ENCODE measurements at regions of chr16 and their contacts with region 1.

Region 1: DNA sequence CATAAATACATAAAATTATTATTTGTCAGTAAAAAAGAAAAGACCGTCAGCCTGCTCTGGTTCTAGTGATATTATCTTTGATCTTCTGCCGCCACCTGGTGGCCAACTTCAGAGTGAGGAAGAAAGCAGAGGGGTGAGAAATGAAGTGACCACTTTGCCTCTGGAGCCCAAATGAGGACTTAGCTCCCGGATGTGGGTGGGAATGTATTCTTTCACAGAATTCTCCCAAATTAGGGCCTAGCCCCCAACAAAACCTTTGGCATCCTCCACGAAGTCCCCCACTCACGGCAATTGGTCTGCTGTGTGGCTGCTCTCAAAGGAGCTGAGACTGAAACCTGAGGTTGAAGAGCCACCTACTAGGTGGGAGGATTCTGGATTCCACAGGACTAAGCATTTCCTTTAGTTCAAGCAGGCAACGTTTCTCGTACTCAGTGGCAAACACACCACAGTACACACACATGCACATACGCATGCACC is 4.9 kb upstream of the ZNF267 start:
- DNase-seq: peak; percentile 62 to 81 (median 74)
- ATAC-seq: peak; percentile 20
- H3K4me3 ChIP-seq: peak overlapping the region; percentile 42
- H3K4me3 Mint-ChIP-seq: peak overlapping the region; percentile 67 to 86 (median 74)
- H3K27ac ChIP-seq: peak overlapping the region; percentile 60
- H3K27ac Mint-ChIP-seq: peak overlapping the region; percentile 8 to 95 (median 85)
- H3K4me1 ChIP-seq: peaks cover 32 to 36% of the 10 kb centered on the region in 2 donors
- H3K4me1 Mint-ChIP-seq: peaks cover 27 to 65% (median 50%) of the 10 kb centered on the region in 7 donors
- H3K27me3 ChIP-seq: no peaks in the 10 kb centered on the region
- H3K27me3 Mint-ChIP-seq: peaks cover 0 to 5% (median 0%) of the 10 kb centered on the region in 5 donors

Region 2: GRCh38 chr16:31032736-31033708 is 835.7 kb before region 1 on chr16 and contains the start of gene STX4:
- CTCF ChIA-PET with region 1: no interaction called
- POLR2A ChIA-PET with region 1: no interaction called
- intact Hi-C with region 1: loop called in 1 of 2 experiments (anchors 2 kb)
- DNase-seq: peak; percentile 90 to 100 (median 97)
- ATAC-seq: peak; percentile 89
- H3K4me3 ChIP-seq: peak within 1 kb of the TSS; percentile 82
- H3K4me3 Mint-ChIP-seq: peak within 1 kb of the TSS; percentile 78 to 100 (median 96)
- H3K27ac ChIP-seq: peak within 1 kb of the TSS; percentile 93
- H3K27ac Mint-ChIP-seq: peak within 1 kb of the TSS; percentile 84 to 99 (median 97)
- H3K4me1 ChIP-seq: peaks cover 14 to 16% of the 10 kb centered on the region in 2 donors
- H3K4me1 Mint-ChIP-seq: peaks cover 15 to 35% (median 22%) of the 10 kb centered on the region in 7 donors
- H3K27me3 ChIP-seq: no peaks in the 10 kb centered on the region
- H3K27me3 Mint-ChIP-seq: peaks cover 0 to 3% (median 0%) of the 10 kb centered on the region in 5 donors
- total RNA-seq, gene STX4: 77.9 to 114 (median 100) TPM

Region 3: DNA sequence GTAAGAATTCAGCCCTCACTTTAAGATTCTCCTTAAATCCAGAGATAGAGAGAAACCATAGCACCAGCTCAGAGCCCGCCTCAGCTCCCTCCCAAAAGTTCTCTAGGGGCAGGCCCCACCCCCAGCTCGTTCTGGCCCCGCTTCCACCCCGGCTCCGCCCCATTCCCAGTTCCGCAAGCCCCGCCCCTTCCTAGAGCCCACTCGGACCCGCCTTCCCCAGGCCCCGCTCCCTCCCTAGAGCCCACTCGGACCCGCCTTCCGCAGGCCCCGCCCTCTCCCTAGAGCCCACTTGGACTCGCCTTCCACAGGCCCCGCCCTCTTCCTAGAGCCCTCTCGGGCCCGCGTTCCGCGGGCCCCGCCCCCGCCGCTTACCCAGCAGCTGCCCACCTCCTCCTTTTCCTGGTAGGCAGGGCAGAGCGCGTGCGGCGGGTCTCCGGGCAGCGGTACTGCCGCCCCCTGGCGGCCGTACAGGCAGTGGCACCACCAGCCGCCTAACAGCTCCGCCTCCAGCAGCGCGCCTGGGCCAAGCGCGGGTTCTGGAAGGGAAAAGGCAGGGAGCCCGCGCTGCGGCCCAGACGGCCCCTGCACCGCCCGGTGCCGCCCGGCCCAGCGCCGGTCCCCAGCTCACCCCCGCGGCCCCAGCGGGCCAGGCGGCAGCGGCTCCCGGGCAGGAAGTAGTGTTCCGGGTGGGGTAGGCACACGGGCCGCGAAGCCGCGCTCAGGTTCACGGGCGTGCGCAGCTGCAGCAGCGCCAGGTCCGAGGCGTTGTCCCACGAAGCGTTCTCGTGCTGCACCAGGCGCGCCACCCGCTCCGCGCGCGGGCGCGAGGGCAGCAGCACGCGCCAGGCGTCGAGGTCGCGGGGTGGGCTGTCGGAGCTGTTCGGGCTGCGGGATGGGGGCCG is 726.4 kb before region 1 on chr16:
- CTCF ChIA-PET with region 1: interaction called, 4 read pairs
- POLR2A ChIA-PET with region 1: interaction called, 7 read pairs
- intact Hi-C with region 1: loop called (anchors 1 kb)
- DNase-seq: peak; percentile 91 to 98 (median 95)
- ATAC-seq: peak; percentile 95
- H3K4me3 ChIP-seq: peak overlapping the region; percentile 68
- H3K4me3 Mint-ChIP-seq: peak overlapping the region; percentile 61 to 84 (median 72)
- H3K27ac ChIP-seq: peak overlapping the region; percentile 74
- H3K27ac Mint-ChIP-seq: peak overlapping the region; percentile 73 to 94 (median 84)
- H3K4me1 ChIP-seq: peaks cover 6 to 14% of the 10 kb centered on the region in 2 donors
- H3K4me1 Mint-ChIP-seq: peaks cover 0 to 17% (median 14%) of the 10 kb centered on the region in 7 donors
- H3K27me3 ChIP-seq: no peaks in the 10 kb centered on the region
- H3K27me3 Mint-ChIP-seq: peaks cover 0 to 3% (median 0%) of the 10 kb centered on the region in 5 donors

Region 4: GRCh38 chr16:31333686-31334649 is 534.8 kb before region 1 on chr16:
- CTCF ChIA-PET with region 1: no interaction called
- POLR2A ChIA-PET with region 1: no interaction called
- intact Hi-C with region 1: loop called in 1 of 2 experiments (anchors 5 kb)
- DNase-seq: peak in 5 of 9 donors; percentile 25 to 47 (median 34)
- ATAC-seq: peak; percentile 87
- H3K4me3 ChIP-seq: no peak overlapping the region
- H3K4me3 Mint-ChIP-seq: peak overlapping the region in 1 of 10 donors; percentile 34
- H3K27ac ChIP-seq: peak overlapping the region; percentile 1
- H3K27ac Mint-ChIP-seq: peak overlapping the region in 7 of 9 donors; percentile 26 to 95 (median 48)
- H3K4me1 ChIP-seq: peaks cover 0 to 3% of the 10 kb centered on the region in 2 donors
- H3K4me1 Mint-ChIP-seq: peaks cover 16 to 48% (median 28%) of the 10 kb centered on the region in 7 donors
- H3K27me3 ChIP-seq: no peaks in the 10 kb centered on the region
- H3K27me3 Mint-ChIP-seq: peaks cover 0 to 17% (median 10%) of the 10 kb centered on the region in 5 donors

Region 5: GRCh38 chr16:31440516-31441184 is 428.1 kb before region 1 on chr16:
- CTCF ChIA-PET with region 1: interaction called, 3 read pairs
- POLR2A ChIA-PET with region 1: interaction called, 3 read pairs
- intact Hi-C with region 1: loop called in 1 of 2 experiments (anchors 1 kb)
- DNase-seq: no peak
- ATAC-seq: no peak
- H3K4me3 ChIP-seq: no peak overlapping the region
- H3K4me3 Mint-ChIP-seq: peak overlapping the region in 1 of 10 donors; percentile 22
- H3K27ac ChIP-seq: no peak overlapping the region
- H3K27ac Mint-ChIP-seq: no peak overlapping the region
- H3K4me1 ChIP-seq: no peaks in the 10 kb centered on the region
- H3K4me1 Mint-ChIP-seq: peaks cover 0 to 23% (median 9%) of the 10 kb centered on the region in 7 donors
- H3K27me3 ChIP-seq: no peaks in the 10 kb centered on the region
- H3K27me3 Mint-ChIP-seq: peaks cover 0 to 3% (median 0%) of the 10 kb centered on the region in 5 donors

Region 6: DNA sequence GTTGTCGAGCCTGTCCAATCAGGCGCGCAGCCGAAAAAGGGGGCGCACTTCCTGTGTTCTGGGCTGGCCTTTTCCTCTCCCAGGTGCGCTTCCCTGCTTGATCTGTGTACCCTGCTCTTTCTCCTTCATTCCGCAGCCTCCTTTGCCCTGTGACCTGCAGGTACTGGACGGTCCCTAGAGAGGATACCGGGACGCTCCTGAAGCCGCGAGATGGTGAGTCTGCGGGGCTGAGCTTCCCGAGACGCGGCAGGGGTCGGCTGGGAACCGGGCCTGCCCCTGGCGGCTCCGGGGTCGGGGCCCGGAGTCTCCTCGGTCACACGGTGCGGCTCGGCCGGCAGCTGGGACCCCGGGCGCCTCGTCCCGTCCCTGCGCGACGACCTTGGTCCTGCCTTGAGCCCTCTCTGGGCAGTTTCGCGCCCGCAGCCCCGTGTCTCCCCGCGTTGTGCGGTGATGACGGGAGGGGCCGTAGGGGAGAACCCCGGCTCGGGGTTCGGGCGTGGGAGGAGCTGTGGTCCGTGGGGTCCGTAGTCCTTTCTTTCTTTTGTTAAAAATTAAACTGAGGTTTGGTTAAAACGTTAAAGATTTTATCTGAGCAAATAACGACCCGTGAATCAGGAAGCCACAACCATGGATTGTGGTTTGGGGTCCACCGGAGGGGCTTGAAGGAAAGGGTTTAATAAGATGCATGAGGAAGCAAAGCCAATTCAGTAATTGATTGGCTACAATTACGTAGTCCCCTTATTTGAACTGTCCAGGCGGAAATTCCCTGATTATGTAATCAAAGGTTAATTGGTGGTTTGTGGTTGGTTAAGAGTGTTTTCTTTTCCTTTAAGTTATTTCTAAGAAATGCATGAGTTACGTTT is 168.0 kb before region 1 on chr16:
- CTCF ChIA-PET with region 1: interaction called, 3 read pairs
- POLR2A ChIA-PET with region 1: interaction called, 9 read pairs
- intact Hi-C with region 1: loop called (anchors 1 to 2 kb)
- DNase-seq: peak; percentile 67 to 86 (median 81)
- ATAC-seq: peak; percentile 84
- H3K4me3 ChIP-seq: peak overlapping the region; percentile 95
- H3K4me3 Mint-ChIP-seq: peak overlapping the region; percentile 87 to 95 (median 91)
- H3K27ac ChIP-seq: peak overlapping the region; percentile 90
- H3K27ac Mint-ChIP-seq: peak overlapping the region; percentile 86 to 97 (median 93)
- H3K4me1 ChIP-seq: peaks cover 19 to 28% of the 10 kb centered on the region in 2 donors
- H3K4me1 Mint-ChIP-seq: peaks cover 20 to 39% (median 37%) of the 10 kb centered on the region in 7 donors
- H3K27me3 ChIP-seq: no peaks in the 10 kb centered on the region
- H3K27me3 Mint-ChIP-seq: peaks cover 0 to 24% (median 0%) of the 10 kb centered on the region in 5 donors

Region 7: DNA sequence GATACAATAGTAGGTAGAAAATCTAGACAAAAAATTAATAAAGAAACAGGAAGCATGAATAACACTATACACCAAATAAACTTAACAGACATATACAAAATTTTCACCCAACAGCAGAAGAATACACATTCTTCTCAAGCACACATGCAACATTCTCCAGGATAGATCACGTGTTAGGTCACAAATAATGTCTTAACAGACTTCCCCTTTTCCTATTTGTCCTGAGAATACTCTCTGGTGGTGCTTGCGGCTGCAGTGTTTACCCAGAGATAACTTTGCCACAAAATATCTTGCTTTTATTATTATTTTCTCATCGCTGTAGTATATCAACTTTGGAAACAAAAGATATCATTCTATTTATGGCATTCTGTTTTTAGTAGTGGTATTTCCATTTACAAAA is 35.7 kb before region 1 on chr16:
- CTCF ChIA-PET with region 1: no interaction called
- POLR2A ChIA-PET with region 1: no interaction called
- intact Hi-C with region 1: no loop called
- DNase-seq: no peak
- ATAC-seq: no peak
- H3K4me3 ChIP-seq: no peak overlapping the region
- H3K4me3 Mint-ChIP-seq: no peak overlapping the region
- H3K27ac ChIP-seq: no peak overlapping the region
- H3K27ac Mint-ChIP-seq: no peak overlapping the region
- H3K4me1 ChIP-seq: no peaks in the 10 kb centered on the region
- H3K4me1 Mint-ChIP-seq: no peaks in the 10 kb centered on the region
- H3K27me3 ChIP-seq: no peaks in the 10 kb centered on the region
- H3K27me3 Mint-ChIP-seq: peaks cover 0 to 6% (median 0%) of the 10 kb centered on the region in 5 donors

Region 8: GRCh38 chr16:31888735-31889134 is 20.0 kb after region 1 on chr16:
- CTCF ChIA-PET with region 1: no interaction called
- POLR2A ChIA-PET with region 1: interaction called, 17 read pairs
- intact Hi-C with region 1: loop called in 1 of 2 experiments (anchors 2 kb)
- DNase-seq: no peak
- ATAC-seq: no peak
- H3K4me3 ChIP-seq: no peak overlapping the region
- H3K4me3 Mint-ChIP-seq: peak overlapping the region in 4 of 10 donors; percentile 2 to 55 (median 17)
- H3K27ac ChIP-seq: no peak overlapping the region
- H3K27ac Mint-ChIP-seq: peak overlapping the region in 6 of 9 donors; percentile 17 to 84 (median 38)
- H3K4me1 ChIP-seq: peaks cover 0 to 7% of the 10 kb centered on the region in 2 donors
- H3K4me1 Mint-ChIP-seq: peaks cover 20 to 76% (median 62%) of the 10 kb centered on the region in 7 donors
- H3K27me3 ChIP-seq: no peaks in the 10 kb centered on the region
- H3K27me3 Mint-ChIP-seq: no peaks in the 10 kb centered on the region

Measured in naive thymus-derived CD4-positive, alpha-beta T cell (primary cell).